Dendritic cell treated with granulocyte-macrophage colony-stimulating factor and Interleukin-4, amounts not matched to agents 40 ng/mL and 50 ng/mL, for 4 days (primary cell): ENCODE measurements at regions of chr9 and their contacts with region 1.

Region 1: DNA sequence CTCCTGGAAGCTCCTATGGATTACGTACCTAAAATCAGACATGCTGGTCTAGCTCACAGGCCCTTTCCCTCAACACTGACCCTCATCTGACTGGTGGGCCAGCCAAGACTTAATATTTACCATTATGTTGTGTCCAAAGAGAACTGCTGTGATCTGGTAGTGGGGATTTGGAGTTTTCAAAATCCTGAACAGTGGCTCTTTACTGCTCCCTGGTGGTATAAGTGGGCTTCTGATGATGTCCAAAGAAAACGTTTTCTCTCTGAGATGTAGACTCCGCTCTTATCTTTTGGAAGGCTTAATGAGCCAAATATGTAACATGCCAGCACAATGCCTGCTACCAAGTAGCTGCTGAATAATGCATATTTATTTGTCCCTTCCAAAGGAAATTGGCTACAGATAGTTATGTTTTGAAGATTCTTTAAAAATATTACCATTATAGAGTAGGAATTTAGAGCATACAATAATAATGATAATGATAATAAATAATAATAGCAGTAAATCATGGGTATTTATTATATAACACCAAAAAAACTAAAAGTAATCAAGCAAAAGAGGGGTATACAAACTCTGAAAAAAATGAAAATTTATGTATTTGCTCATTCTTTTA is 406.6 kb upstream of the TNC start:
- H3K4me3 Mint-ChIP-seq: no peak overlapping the region
- H3K27ac Mint-ChIP-seq: no peak overlapping the region
- H3K4me1 Mint-ChIP-seq: no peaks in the 10 kb centered on the region
- H3K27me3 Mint-ChIP-seq: no peaks in the 10 kb centered on the region

Region 2: GRCh38 chr9:114662081-114662989 is 862.2 kb before region 1 on chr9:
- intact Hi-C with region 1: loop called (anchors 5 kb)
- H3K4me3 Mint-ChIP-seq: no peak overlapping the region
- H3K27ac Mint-ChIP-seq: no peak overlapping the region
- H3K4me1 Mint-ChIP-seq: peaks cover 23% of the 10 kb centered on the region
- H3K27me3 Mint-ChIP-seq: peaks cover 2% of the 10 kb centered on the region

Region 3: DNA sequence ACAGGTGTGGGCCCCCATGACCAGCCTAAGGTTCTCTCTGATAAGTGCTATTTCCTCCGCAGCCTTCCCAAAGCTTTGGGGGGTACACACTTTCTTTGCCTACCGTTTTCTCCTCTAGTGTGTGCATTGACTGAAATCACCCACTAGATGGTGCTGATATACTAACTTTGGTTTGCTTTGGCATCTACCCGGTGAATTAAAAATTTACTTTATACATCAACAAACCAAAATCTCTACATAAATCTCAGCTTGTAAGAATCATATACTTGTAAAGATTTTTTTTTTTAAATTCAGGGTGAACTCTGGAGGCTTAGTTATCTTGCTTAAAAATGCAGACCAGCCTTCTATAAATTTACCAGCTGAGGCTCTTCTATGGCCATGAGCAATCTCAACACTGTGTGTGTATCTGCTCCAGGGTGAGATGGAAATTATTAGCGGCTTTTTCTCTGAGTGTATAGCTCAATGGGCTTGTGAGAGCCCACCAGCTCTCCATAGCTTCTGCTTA is 69.1 kb after region 1 on chr9:
- intact Hi-C with region 1: no loop called
- H3K4me3 Mint-ChIP-seq: no peak overlapping the region
- H3K27ac Mint-ChIP-seq: no peak overlapping the region
- H3K4me1 Mint-ChIP-seq: no peaks in the 10 kb centered on the region
- H3K27me3 Mint-ChIP-seq: peaks cover 11% of the 10 kb centered on the region